Calu3 (cell line): ENCODE measurements at regions of chr18 and their contacts with region 1.

Region 1: GRCh38 chr18:5073026-5073944 is 123.8 kb downstream of the AKAIN1 start:
- DNase-seq: peak; percentile 37
- H3K4me3 Mint-ChIP-seq: no peak overlapping the region
- H3K27ac Mint-ChIP-seq: no peak overlapping the region
- H3K4me1 Mint-ChIP-seq: no peaks in the 10 kb centered on the region
- H3K27me3 Mint-ChIP-seq: peaks cover 31% of the 10 kb centered on the region
- CTCF ChIP-seq: peak; percentile 66

Region 2: DNA sequence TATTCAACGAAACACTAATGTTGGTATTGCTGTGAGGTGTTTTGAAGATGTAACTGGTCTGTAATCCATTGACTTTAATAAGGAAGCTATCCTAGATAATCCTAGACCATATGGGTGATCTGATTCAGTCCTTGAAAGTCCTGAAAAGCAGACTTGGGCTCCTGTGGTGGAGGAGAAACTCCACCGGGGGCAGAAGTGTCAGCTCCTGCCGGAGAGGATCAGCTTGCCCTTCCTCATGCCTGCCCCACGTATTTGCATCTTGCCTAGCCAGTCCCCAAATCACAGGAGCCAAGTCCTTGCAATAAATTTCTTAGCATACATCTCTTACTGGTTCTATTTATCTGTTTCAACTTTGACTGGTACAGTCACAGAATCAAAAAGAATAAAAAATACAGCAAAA is 474.0 kb before region 1 on chr18:
- CTCF ChIA-PET with region 1: no interaction called
- intact Hi-C with region 1: no loop called
- DNase-seq: no peak
- H3K4me3 Mint-ChIP-seq: no peak overlapping the region
- H3K27ac Mint-ChIP-seq: no peak overlapping the region
- H3K4me1 Mint-ChIP-seq: no peaks in the 10 kb centered on the region
- H3K27me3 Mint-ChIP-seq: no peaks in the 10 kb centered on the region
- CTCF ChIP-seq: no peak

Region 3: DNA sequence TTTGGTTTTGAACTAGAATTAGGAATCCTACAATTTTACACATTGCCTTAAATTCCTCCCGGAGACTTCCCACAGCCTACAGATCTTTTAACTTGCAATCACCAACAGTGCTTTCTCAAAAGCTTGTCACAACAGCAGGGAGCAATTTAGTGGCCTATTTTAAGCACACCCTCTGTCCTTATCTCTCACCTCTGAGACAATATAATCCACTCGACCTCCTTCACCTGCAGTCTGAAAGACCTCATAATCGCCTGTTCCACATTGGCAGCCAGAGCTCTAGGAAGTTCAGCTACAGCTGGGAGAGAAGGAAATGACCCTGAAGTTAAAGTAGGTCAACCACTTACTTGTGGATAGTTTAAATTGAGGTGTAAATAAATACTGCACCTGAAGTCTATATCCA is 368.5 kb before region 1 on chr18:
- CTCF ChIA-PET with region 1: no interaction called
- intact Hi-C with region 1: no loop called
- DNase-seq: no peak
- H3K4me3 Mint-ChIP-seq: no peak overlapping the region
- H3K27ac Mint-ChIP-seq: no peak overlapping the region
- H3K4me1 Mint-ChIP-seq: no peaks in the 10 kb centered on the region
- H3K27me3 Mint-ChIP-seq: no peaks in the 10 kb centered on the region
- CTCF ChIP-seq: no peak

Region 4: GRCh38 chr18:5424903-5425664 is 351.8 kb after region 1 on chr18:
- CTCF ChIA-PET with region 1: no interaction called
- intact Hi-C with region 1: loop called (anchors 10 kb)
- DNase-seq: no peak
- H3K4me3 Mint-ChIP-seq: no peak overlapping the region
- H3K27ac Mint-ChIP-seq: no peak overlapping the region
- H3K4me1 Mint-ChIP-seq: no peaks in the 10 kb centered on the region
- H3K27me3 Mint-ChIP-seq: peaks cover 9% of the 10 kb centered on the region
- CTCF ChIP-seq: peak; percentile 17

Region 5: DNA sequence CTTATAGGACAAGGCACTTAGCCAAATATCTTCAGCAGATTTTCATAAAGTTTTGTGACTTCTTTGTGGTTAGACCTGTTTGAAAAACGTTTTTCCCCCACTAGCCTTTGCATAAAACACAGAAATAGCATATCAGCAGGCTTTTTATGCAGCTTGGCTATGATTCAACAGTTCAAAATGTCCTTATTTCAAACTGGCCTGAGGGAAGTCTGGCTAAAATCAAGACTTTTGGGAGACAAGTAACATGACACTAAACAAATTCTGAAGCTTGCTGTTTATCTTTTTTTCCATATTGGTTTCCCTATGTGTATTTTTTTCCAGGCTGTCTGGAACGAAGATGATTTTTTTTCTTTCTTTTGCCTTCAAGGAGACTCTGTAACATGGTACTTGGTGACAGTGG is 1436.5 kb after region 1 on chr18:
- CTCF ChIA-PET with region 1: no interaction called
- intact Hi-C with region 1: loop called (anchors 10 kb)
- DNase-seq: no peak
- H3K4me3 Mint-ChIP-seq: no peak overlapping the region
- H3K27ac Mint-ChIP-seq: no peak overlapping the region
- H3K4me1 Mint-ChIP-seq: no peaks in the 10 kb centered on the region
- H3K27me3 Mint-ChIP-seq: peaks cover 66% of the 10 kb centered on the region
- CTCF ChIP-seq: no peak

Region 6: GRCh38 chr18:6543330-6543908 is 1470.1 kb after region 1 on chr18:
- CTCF ChIA-PET with region 1: no interaction called
- intact Hi-C with region 1: loop called (anchors 10 kb)
- DNase-seq: no peak
- H3K4me3 Mint-ChIP-seq: no peak overlapping the region
- H3K27ac Mint-ChIP-seq: no peak overlapping the region
- H3K4me1 Mint-ChIP-seq: peaks cover 10% of the 10 kb centered on the region
- H3K27me3 Mint-ChIP-seq: peaks cover 28% of the 10 kb centered on the region
- CTCF ChIP-seq: peak; percentile 64

Region 7: DNA sequence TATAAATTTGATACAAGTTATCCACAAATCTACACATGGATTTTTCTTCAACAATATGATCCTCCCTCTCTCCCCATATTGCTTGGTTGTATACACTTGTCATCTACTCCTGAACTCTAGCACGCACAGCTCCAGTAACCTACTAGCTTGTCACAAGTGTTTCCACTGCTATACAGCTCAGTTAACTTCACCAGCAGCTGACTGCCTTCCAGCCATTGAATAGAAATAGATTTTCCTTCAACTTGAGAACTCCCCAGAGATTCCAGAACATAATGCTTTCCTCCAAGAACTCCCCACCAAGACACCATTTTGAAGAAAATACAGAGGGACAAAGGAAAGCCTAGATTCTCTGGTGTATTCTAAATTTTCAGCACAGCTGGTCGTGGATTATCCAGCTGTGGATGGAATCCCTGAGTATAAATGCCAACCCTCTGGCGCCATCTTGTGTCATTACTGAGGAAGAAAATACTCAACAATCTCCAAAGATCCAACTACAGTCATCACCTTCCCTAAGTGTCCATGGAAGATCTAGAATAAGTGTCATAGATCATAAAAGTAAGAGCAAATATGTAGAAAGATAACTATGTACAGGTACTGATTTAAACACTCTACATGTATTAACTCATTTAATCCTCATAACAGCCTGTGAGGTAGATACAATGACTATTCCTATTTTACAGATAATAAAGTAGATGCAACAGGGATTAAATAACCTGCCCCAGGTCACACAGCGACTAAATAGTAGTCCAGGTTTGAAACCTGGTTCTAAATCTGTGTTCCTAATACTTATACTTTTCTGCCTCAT is 1812.9 kb after region 1 on chr18:
- CTCF ChIA-PET with region 1: no interaction called
- intact Hi-C with region 1: loop called (anchors 2 kb)
- DNase-seq: peak; percentile 50
- H3K4me3 Mint-ChIP-seq: no peak overlapping the region
- H3K27ac Mint-ChIP-seq: no peak overlapping the region
- H3K4me1 Mint-ChIP-seq: no peaks in the 10 kb centered on the region
- H3K27me3 Mint-ChIP-seq: peaks cover 57% of the 10 kb centered on the region
- CTCF ChIP-seq: peak; percentile 51

Region 8: GRCh38 chr18:7021994-7022840 is 1948.9 kb after region 1 on chr18:
- CTCF ChIA-PET with region 1: no interaction called
- intact Hi-C with region 1: loop called (anchors 5 kb)
- DNase-seq: peak; percentile 71
- H3K4me3 Mint-ChIP-seq: no peak overlapping the region
- H3K27ac Mint-ChIP-seq: no peak overlapping the region
- H3K4me1 Mint-ChIP-seq: no peaks in the 10 kb centered on the region
- H3K27me3 Mint-ChIP-seq: peaks cover 33% of the 10 kb centered on the region
- CTCF ChIP-seq: peak; percentile 86